ENCODE measurements at regions of chr18 and their contacts with region 1.

Region 1: DNA sequence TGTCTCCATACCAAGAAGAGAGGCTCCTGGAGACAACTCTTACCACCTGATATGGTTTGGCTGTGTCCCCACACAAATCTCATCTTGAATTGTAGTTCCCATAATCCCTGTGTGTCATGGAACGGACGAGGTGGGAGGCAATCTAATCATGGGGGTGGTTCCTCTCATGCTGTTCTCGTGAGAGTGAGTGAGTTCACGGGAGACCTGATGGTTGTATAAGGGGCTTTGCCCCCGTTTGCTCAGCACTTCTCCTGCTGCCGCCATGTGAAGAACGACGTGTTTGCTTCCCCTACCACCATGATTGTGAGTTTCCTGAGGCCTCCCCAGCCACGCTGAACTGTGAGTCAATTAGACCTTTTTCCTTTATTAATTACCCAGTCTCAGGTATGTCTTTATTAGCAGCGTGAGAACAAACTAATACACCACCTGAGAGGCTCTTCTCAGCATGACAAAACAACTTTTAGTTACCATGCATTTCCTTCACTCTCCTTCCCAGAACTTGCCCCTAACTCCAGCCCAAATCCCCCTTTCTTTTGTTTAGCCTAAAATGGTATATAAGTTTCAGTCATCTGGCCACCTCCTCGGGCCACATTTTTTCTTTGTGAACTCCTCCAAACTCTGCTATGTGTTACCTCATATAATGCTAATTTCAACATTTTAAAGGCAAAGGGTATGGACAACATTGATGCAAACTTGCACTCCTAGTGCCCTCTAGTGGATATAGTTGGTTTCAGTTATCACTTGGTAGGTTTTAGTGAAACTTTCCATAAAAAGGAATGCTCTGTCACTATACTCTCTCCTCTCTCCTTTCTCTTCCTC is 58.6 kb upstream of the SLC25A52 start:
- DNase-seq: no peak
- ATAC-seq: peak; percentile 95
- H3K4me3 ChIP-seq: no peak overlapping the region
- H3K27ac ChIP-seq: no peak overlapping the region
- H3K4me1 ChIP-seq: no peaks in the 10 kb centered on the region; the same call in 1 of the 2 replicates
- H3K27me3 ChIP-seq: no peaks in the 10 kb centered on the region
- CTCF ChIP-seq: peak; percentile 57 to 80 (median 64); a peak in 5 of 6 replicates
- EP300 ChIP-seq: no peak
- POLR2A ChIP-seq: no peak
- RAD21 ChIP-seq: peak; percentile 94

Region 2: GRCh38 chr18:31429621-31430020 is 389.7 kb before region 1 on chr18:
- CTCF ChIA-PET with region 1: interaction called, 6 read pairs
- POLR2A ChIA-PET with region 1: no interaction called
- RAD21 ChIA-PET with region 1: no interaction called
- SMC1A ChIA-PET with region 1: no interaction called
- in situ Hi-C with region 1: no loop called
- intact Hi-C with region 1: loop called (anchors 5 kb)
- DNase-seq: no peak
- ATAC-seq: no peak
- H3K4me3 ChIP-seq: no peak overlapping the region
- H3K27ac ChIP-seq: no peak overlapping the region
- H3K4me1 ChIP-seq: no peaks in the 10 kb centered on the region
- H3K27me3 ChIP-seq: no peaks in the 10 kb centered on the region
- CTCF ChIP-seq: no peak
- EP300 ChIP-seq: no peak
- POLR2A ChIP-seq: no peak
- RAD21 ChIP-seq: no peak

Region 3: GRCh38 chr18:31563778-31564177 is 255.5 kb before region 1 on chr18:
- CTCF ChIA-PET with region 1: interaction called, 11 read pairs
- POLR2A ChIA-PET with region 1: no interaction called
- RAD21 ChIA-PET with region 1: no interaction called
- SMC1A ChIA-PET with region 1: interaction called, 5 read pairs
- in situ Hi-C with region 1: loop called (anchors 5 kb)
- intact Hi-C with region 1: no loop called
- DNase-seq: no peak
- ATAC-seq: 0 out of 3 replicates have a peak, but pooled peaks have one; percentile 45
- H3K4me3 ChIP-seq: no peak overlapping the region
- H3K27ac ChIP-seq: no peak overlapping the region
- H3K4me1 ChIP-seq: no peaks in the 10 kb centered on the region
- H3K27me3 ChIP-seq: no peaks in the 10 kb centered on the region
- CTCF ChIP-seq: peak in 2 of 3 experiments; percentile 19 to 28; a peak in 2 of 6 replicates
- EP300 ChIP-seq: no peak
- POLR2A ChIP-seq: no peak
- RAD21 ChIP-seq: peak; percentile 44

Region 4: GRCh38 chr18:31750273-31750672 is 69.0 kb before region 1 on chr18:
- CTCF ChIA-PET with region 1: interaction called, 12 read pairs
- POLR2A ChIA-PET with region 1: no interaction called
- RAD21 ChIA-PET with region 1: interaction called, 5 read pairs
- SMC1A ChIA-PET with region 1: interaction called, 7 read pairs
- in situ Hi-C with region 1: no loop called
- intact Hi-C with region 1: no loop called
- DNase-seq: no peak
- ATAC-seq: no peak
- H3K4me3 ChIP-seq: no peak overlapping the region
- H3K27ac ChIP-seq: no peak overlapping the region
- H3K4me1 ChIP-seq: no peaks in the 10 kb centered on the region
- H3K27me3 ChIP-seq: no peaks in the 10 kb centered on the region
- CTCF ChIP-seq: no peak
- EP300 ChIP-seq: no peak
- POLR2A ChIP-seq: no peak
- RAD21 ChIP-seq: no peak

Region 5: GRCh38 chr18:31760695-31761094 is 58.6 kb before region 1 on chr18 and contains the start of gene SLC25A52:
- CTCF ChIA-PET with region 1: no interaction called
- POLR2A ChIA-PET with region 1: no interaction called
- RAD21 ChIA-PET with region 1: no interaction called
- SMC1A ChIA-PET with region 1: no interaction called
- in situ Hi-C with region 1: no loop called
- intact Hi-C with region 1: no loop called
- DNase-seq: no peak
- ATAC-seq: no peak
- H3K4me3 ChIP-seq: no peak within 1 kb of the TSS
- H3K27ac ChIP-seq: no peak within 1 kb of the TSS
- H3K4me1 ChIP-seq: no peaks in the 10 kb centered on the region
- H3K27me3 ChIP-seq: no peaks in the 10 kb centered on the region
- CTCF ChIP-seq: no peak
- EP300 ChIP-seq: no peak
- POLR2A ChIP-seq: no peak
- RAD21 ChIP-seq: no peak
- polyA plus RNA-seq, gene SLC25A52: not detected

Region 6: GRCh38 chr18:31977270-31977872 is 158.1 kb after region 1 on chr18:
- CTCF ChIA-PET with region 1: interaction called, 16 read pairs
- POLR2A ChIA-PET with region 1: no interaction called
- RAD21 ChIA-PET with region 1: interaction called, 8 read pairs
- SMC1A ChIA-PET with region 1: interaction called, 5 read pairs
- in situ Hi-C with region 1: no loop called
- intact Hi-C with region 1: loop called (anchors 1 kb)
- DNase-seq: no peak
- ATAC-seq: peak; percentile 80
- H3K4me3 ChIP-seq: no peak overlapping the region
- H3K27ac ChIP-seq: no peak overlapping the region
- H3K4me1 ChIP-seq: no peaks in the 10 kb centered on the region
- H3K27me3 ChIP-seq: no peaks in the 10 kb centered on the region
- CTCF ChIP-seq: peak; percentile 49 to 65 (median 50); a peak in 5 of 6 replicates
- EP300 ChIP-seq: no peak
- POLR2A ChIP-seq: no peak
- RAD21 ChIP-seq: peak; percentile 74

Region 7: GRCh38 chr18:32048507-32049091 is 229.3 kb after region 1 on chr18:
- CTCF ChIA-PET with region 1: no interaction called
- POLR2A ChIA-PET with region 1: no interaction called
- RAD21 ChIA-PET with region 1: no interaction called
- SMC1A ChIA-PET with region 1: no interaction called
- in situ Hi-C with region 1: no loop called
- intact Hi-C with region 1: no loop called
- DNase-seq: peak; percentile 24
- ATAC-seq: peak; percentile 83
- H3K4me3 ChIP-seq: no peak overlapping the region
- H3K27ac ChIP-seq: peak overlapping the region; percentile 58
- H3K4me1 ChIP-seq: peaks cover 15% of the 10 kb centered on the region
- H3K27me3 ChIP-seq: no peaks in the 10 kb centered on the region
- CTCF ChIP-seq: no peak
- EP300 ChIP-seq: no peak
- POLR2A ChIP-seq: no peak
- RAD21 ChIP-seq: no peak

Measured in GM12878 (cell line).